Activated CD8-positive, alpha-beta memory T cell treated with anti-CD3 and anti-CD28 coated beads, Interleukin-2, amount 10 ng/mL, durations not matched to agents 7 days and 5 days (primary cell): ENCODE measurements at regions of chr1 and their contacts with region 1.

Region 1: DNA sequence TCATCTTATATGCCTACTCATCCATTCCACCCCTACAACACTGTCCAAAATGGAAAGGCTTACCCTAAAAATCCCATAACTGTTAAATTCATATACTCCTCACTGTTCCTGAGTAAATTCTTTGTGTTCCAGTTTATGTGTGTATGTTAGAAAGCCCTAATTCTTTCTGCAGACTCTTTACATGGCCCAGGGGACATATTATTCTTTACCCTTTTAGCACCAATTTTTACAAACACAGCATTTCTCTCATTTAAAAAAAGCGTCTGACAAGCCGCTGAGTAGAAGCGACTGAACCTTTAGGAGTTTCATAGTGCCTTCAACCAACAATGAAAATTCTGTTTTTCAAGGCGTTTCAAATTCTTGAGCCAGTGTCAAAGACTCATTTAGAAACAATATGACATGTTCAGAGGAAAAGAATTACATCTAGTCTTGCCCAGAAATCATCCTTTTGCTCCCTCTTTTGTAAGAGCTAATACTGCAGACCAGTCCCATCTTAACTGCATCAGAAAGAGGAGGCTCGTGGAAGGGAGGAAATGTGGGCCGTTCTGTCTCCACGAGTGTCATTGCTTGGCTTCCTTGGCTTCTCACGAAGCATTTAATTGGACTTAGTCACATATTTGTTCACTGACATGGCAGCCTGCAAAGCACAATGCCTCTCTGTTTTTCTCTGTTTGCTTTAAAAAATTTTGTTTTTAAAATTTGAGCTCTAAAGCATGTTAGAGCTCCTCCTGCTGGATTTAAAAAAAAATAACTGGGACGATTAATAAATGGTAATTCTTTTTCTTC is 21.3 kb upstream of the C1orf105 start:
- DNase-seq: no peak
- ATAC-seq: peak; percentile 38
- H3K4me3 Mint-ChIP-seq: no peak overlapping the region
- H3K27ac Mint-ChIP-seq: peak overlapping the region; percentile 58
- H3K4me1 Mint-ChIP-seq: peaks cover 57% of the 10 kb centered on the region
- H3K27me3 Mint-ChIP-seq: peaks cover 2% of the 10 kb centered on the region

Region 2: GRCh38 chr1:172002725-172003345 is 396.3 kb before region 1 on chr1:
- CTCF ChIA-PET with region 1: interaction called, 13 read pairs
- DNase-seq: no peak
- ATAC-seq: no peak
- H3K4me3 Mint-ChIP-seq: no peak overlapping the region
- H3K27ac Mint-ChIP-seq: no peak overlapping the region
- H3K4me1 Mint-ChIP-seq: no peaks in the 10 kb centered on the region
- H3K27me3 Mint-ChIP-seq: no peaks in the 10 kb centered on the region

Region 3: GRCh38 chr1:172089768-172090510 is 309.2 kb before region 1 on chr1:
- CTCF ChIA-PET with region 1: interaction called, 11 read pairs
- DNase-seq: peak; percentile 75
- ATAC-seq: peak; percentile 82
- H3K4me3 Mint-ChIP-seq: no peak overlapping the region
- H3K27ac Mint-ChIP-seq: no peak overlapping the region
- H3K4me1 Mint-ChIP-seq: peaks cover 3% of the 10 kb centered on the region
- H3K27me3 Mint-ChIP-seq: no peaks in the 10 kb centered on the region

Region 4: GRCh38 chr1:172357753-172358385 is 41.3 kb before region 1 on chr1:
- CTCF ChIA-PET with region 1: interaction called, 17 read pairs
- DNase-seq: no peak
- ATAC-seq: peak; percentile 2
- H3K4me3 Mint-ChIP-seq: peak overlapping the region; percentile 50
- H3K27ac Mint-ChIP-seq: peak overlapping the region; percentile 88
- H3K4me1 Mint-ChIP-seq: peaks cover 48% of the 10 kb centered on the region
- H3K27me3 Mint-ChIP-seq: no peaks in the 10 kb centered on the region

Region 5: GRCh38 chr1:172443626-172444453 is 44.7 kb after region 1 on chr1 and contains the start of gene PIGC:
- CTCF ChIA-PET with region 1: interaction called, 13 read pairs
- DNase-seq: peak; percentile 95
- ATAC-seq: peak; percentile 100
- H3K4me3 Mint-ChIP-seq: peak within 1 kb of the TSS; percentile 82
- H3K27ac Mint-ChIP-seq: peak within 1 kb of the TSS; percentile 82
- H3K4me1 Mint-ChIP-seq: peaks cover 27% of the 10 kb centered on the region
- H3K27me3 Mint-ChIP-seq: no peaks in the 10 kb centered on the region
- total RNA-seq, gene PIGC: 20.9 to 23.8 TPM